ENCODE measurements at regions of chr4 and their contacts with region 1.

Region 1: DNA sequence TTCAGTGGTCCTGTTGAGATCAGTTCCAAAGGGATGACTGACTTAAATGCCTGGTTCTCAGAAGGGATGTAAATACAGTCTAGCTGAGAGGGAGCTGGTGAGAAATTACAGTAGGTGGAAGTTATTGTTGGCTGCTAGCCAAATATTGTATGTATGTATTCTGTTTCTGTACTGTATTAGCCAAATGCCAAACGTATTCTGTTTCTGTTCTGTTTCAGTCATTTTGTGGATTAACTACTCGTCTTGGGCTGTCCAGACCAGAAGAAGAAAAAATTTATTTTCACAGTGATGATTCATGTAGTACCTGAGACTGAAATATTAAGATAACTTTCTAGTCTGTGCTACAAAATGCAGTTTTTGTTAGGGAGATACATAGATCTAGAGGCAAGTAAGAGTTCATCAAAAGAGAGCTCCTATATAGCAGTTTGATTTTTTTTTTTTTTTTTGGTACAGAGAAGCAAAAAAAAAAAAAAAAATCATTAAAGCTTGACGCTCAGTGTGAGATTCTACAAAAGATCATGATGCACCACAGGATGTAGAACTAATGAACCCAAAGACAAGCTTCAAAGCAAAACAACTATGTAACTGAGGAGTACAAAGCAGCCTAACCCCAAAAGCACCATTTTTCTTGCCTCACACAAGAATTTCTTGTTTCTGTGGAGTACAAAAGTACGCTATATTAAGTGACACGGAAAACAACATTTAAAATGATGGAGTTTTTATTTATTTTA is 54.8 kb downstream of the CASP6 start:
- DNase-seq: peak; percentile 70 to 84 (median 81)
- H3K4me3 ChIP-seq: peak overlapping the region; percentile 12 to 25
- H3K4me3 Mint-ChIP-seq: peak overlapping the region; percentile 59 to 86 (median 77)
- H3K27ac ChIP-seq: peak overlapping the region; percentile 61
- H3K27ac Mint-ChIP-seq: peak overlapping the region in 6 of 7 donors; percentile 90 to 98 (median 94)
- H3K4me1 ChIP-seq: peaks cover 82% of the 10 kb centered on the region
- H3K4me1 Mint-ChIP-seq: peaks cover 12 to 48% (median 41%) of the 10 kb centered on the region in 4 donors
- H3K27me3 ChIP-seq: no peaks in the 10 kb centered on the region
- H3K27me3 Mint-ChIP-seq: no peaks in the 10 kb centered on the region

Region 2: GRCh38 chr4:109574102-109574850 is 74.2 kb before region 1 on chr4:
- CTCF ChIA-PET with region 1: interaction called, 5 read pairs
- POLR2A ChIA-PET with region 1: interaction called, 5 read pairs
- intact Hi-C with region 1: loop called (anchors 1 kb)
- DNase-seq: peak in 4 of 5 donors; percentile 31 to 45 (median 40)
- H3K4me3 ChIP-seq: no peak overlapping the region
- H3K4me3 Mint-ChIP-seq: peak overlapping the region; percentile 4 to 79 (median 50)
- H3K27ac ChIP-seq: no peak overlapping the region
- H3K27ac Mint-ChIP-seq: peak overlapping the region; percentile 10 to 88 (median 59)
- H3K4me1 ChIP-seq: peaks cover 63% of the 10 kb centered on the region
- H3K4me1 Mint-ChIP-seq: peaks cover 52 to 80% (median 67%) of the 10 kb centered on the region in 4 donors
- H3K27me3 ChIP-seq: no peaks in the 10 kb centered on the region
- H3K27me3 Mint-ChIP-seq: no peaks in the 10 kb centered on the region

Region 3: GRCh38 chr4:109690690-109691410 is 42.4 kb after region 1 on chr4:
- CTCF ChIA-PET with region 1: no interaction called
- POLR2A ChIA-PET with region 1: interaction called, 6 read pairs
- intact Hi-C with region 1: loop called (anchors 2 kb)
- DNase-seq: peak in 4 of 5 donors; percentile 36 to 54 (median 46)
- H3K4me3 ChIP-seq: no peak overlapping the region
- H3K4me3 Mint-ChIP-seq: peak overlapping the region; percentile 43 to 83 (median 74)
- H3K27ac ChIP-seq: peak overlapping the region; percentile 7
- H3K27ac Mint-ChIP-seq: peak overlapping the region; percentile 79 to 93 (median 86)
- H3K4me1 ChIP-seq: peaks cover 24% of the 10 kb centered on the region
- H3K4me1 Mint-ChIP-seq: peaks cover 26 to 46% (median 36%) of the 10 kb centered on the region in 4 donors
- H3K27me3 ChIP-seq: no peaks in the 10 kb centered on the region
- H3K27me3 Mint-ChIP-seq: no peaks in the 10 kb centered on the region

Region 4: GRCh38 chr4:109815151-109816081 is 167.0 kb after region 1 on chr4 and contains the start of gene GAR1:
- CTCF ChIA-PET with region 1: no interaction called
- POLR2A ChIA-PET with region 1: interaction called, 3 read pairs
- intact Hi-C with region 1: loop called (anchors 2 kb)
- DNase-seq: peak; percentile 85 to 93 (median 87)
- H3K4me3 ChIP-seq: peak within 1 kb of the TSS; percentile 98 to 100
- H3K4me3 Mint-ChIP-seq: peak within 1 kb of the TSS; percentile 97 to 99 (median 98)
- H3K27ac ChIP-seq: peak within 1 kb of the TSS; percentile 93
- H3K27ac Mint-ChIP-seq: peak within 1 kb of the TSS; percentile 97 to 99 (median 99)
- H3K4me1 ChIP-seq: peaks cover 22% of the 10 kb centered on the region
- H3K4me1 Mint-ChIP-seq: peaks cover 27 to 44% (median 36%) of the 10 kb centered on the region in 4 donors
- H3K27me3 ChIP-seq: no peaks in the 10 kb centered on the region
- H3K27me3 Mint-ChIP-seq: no peaks in the 10 kb centered on the region
- total RNA-seq, gene GAR1: 13.7 to 14.1 TPM

Measured in CD4-positive, alpha-beta memory T cell (primary cell).